ENCODE measurements at regions of chr9 and their contacts with region 1.

Region 1: DNA sequence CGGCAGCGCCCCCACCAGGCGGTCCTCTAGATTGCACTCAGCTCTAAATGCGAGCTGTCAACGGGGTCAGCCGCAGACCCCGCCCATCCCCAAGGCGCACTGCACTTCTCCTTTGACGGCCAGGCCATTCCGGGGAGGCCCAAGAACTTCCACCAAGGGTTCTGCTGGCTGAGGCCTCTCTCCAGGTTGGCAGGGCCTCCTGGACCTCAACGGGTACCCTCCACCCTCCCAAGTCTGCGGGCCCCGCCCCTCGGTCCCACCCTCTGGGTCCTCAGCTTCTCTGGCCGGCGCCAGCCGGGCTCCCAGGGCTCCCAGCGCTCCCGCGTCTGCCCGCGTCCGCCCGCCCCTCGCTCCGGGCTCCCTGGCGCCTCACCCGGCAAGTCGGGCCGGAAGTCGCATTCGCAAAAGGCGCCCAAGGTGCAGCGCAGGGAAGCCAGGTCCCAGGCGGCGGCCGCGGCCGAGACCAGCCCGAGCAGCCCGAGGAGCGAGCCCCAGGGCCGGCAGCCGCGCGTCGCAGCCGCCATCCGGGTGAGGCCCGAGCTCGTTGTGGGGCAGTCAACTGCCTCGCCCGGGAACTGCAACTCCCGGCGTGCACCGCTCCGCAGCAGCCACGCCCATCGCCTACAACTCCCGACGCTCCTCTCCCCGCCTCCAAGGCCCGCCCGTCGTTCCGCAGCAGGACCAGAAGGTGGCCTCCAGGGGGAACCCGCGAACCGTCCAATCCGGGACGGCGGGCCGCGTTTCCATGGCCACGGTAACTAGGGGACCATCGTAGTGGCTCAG is at the start of gene TOR2A:
- DNase-seq: peak; percentile 96
- H3K4me3 Mint-ChIP-seq: peak within 1 kb of the TSS; percentile 74
- H3K27ac Mint-ChIP-seq: peak within 1 kb of the TSS; percentile 22
- H3K4me1 Mint-ChIP-seq: no peaks in the 10 kb centered on the region
- H3K27me3 Mint-ChIP-seq: no peaks in the 10 kb centered on the region
- CTCF ChIP-seq: peak; percentile 96
- total RNA-seq, gene TOR2A: 8.4 and 11.3 TPM in 2 replicates

Region 2: DNA sequence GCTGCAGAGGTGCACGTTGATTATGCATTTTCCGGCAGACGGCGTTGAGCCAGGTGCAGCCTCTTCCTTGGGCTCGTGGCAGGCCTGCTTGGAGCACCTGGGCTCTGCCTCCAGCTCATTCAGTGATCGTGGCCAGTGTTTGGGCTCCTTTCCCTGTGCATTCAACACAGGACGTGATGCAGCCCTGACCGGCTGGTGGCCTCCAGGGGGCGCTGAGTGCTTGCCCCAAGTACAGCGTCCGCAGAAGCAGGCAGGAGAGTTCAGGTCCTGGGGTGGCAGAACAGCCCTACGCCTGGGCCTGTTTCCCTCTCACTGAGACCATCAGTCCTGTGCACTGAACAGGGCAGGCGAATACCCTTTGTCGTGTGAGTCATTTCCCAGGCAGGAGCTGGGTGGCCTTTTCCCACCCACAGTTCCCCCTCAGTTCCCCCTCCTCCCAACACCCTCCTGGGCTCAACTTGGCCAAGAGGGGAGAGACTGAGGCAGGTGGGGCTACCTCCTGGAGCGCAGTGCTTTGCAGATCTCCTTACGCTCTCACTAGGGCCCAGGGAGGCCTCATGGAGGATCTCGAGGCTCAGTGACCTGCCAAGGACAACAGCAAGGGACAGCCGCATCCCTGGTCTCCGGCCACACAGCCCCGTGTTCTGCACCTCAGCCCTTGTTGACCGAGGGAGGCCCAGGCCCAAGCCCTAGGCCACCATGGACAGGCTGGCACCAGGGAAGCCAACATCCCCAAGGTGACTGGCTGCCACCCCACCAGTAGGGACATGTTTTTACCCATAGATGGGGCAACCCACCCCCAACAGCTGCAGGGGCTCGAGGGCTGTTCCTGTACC is 230.8 kb before region 1 on chr9:
- CTCF ChIA-PET with region 1: no interaction called
- POLR2A ChIA-PET with region 1: interaction called, 3 read pairs
- intact Hi-C with region 1: loop called (anchors 5 kb)
- DNase-seq: peak; percentile 73
- H3K4me3 Mint-ChIP-seq: no peak overlapping the region
- H3K27ac Mint-ChIP-seq: peak overlapping the region; percentile 12
- H3K4me1 Mint-ChIP-seq: no peaks in the 10 kb centered on the region
- H3K27me3 Mint-ChIP-seq: no peaks in the 10 kb centered on the region
- CTCF ChIP-seq: peak; percentile 76

Region 3: DNA sequence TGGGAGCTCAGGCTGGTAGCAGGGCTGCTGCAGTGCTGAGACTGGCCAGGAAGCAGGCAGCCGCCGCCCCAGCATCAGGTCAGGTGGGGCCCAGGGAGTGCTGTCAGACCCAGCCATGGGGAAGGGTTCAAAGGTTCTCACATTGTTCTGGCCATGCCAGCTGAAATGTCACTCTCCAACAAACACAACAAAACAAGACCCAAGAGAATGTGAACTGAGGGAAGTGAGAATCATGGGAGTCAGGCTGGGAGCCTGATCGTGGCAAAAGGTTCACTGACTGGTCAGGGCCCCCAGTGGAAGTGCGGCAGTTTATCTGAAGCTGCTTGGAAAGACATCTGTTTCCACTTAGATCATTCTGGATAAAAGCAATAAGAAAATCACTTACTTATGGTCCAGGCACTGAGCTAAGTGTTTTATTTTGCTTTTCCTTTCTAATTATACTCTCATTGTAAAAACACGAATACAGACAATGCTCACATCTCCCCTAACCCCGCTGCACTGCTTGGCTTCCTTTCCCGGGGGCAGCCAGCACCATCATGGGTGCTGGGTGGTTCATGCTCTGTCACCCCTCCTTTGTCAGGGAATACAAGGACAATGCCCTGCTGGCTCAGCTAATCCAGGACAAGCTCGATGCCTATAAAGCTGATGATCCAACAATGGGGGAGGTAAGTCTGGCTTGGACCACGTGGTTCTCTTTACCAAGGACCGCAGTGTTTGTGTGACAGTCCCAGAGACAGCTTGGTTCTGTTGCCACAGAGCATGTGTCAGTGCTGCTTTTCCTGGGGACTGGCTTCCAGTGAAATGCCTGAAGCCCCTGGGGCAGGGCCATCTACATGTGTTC is 70.1 kb before region 1 on chr9:
- CTCF ChIA-PET with region 1: no interaction called
- POLR2A ChIA-PET with region 1: no interaction called
- intact Hi-C with region 1: no loop called
- DNase-seq: no peak
- H3K4me3 Mint-ChIP-seq: no peak overlapping the region
- H3K27ac Mint-ChIP-seq: no peak overlapping the region
- H3K4me1 Mint-ChIP-seq: no peaks in the 10 kb centered on the region
- H3K27me3 Mint-ChIP-seq: no peaks in the 10 kb centered on the region
- CTCF ChIP-seq: no peak

Region 4: GRCh38 chr9:127715394-127716337 is 19.3 kb before region 1 on chr9 and contains the starts of genes PTRH1 and TTC16:
- CTCF ChIA-PET with region 1: interaction called, 10 read pairs
- POLR2A ChIA-PET with region 1: interaction called, 10 read pairs
- intact Hi-C with region 1: no loop called
- DNase-seq: peak; percentile 95
- H3K4me3 Mint-ChIP-seq: peak within 1 kb of the TSS; percentile 79
- H3K27ac Mint-ChIP-seq: peak within 1 kb of the TSS; percentile 81
- H3K4me1 Mint-ChIP-seq: peaks cover 13% of the 10 kb centered on the region
- H3K27me3 Mint-ChIP-seq: no peaks in the 10 kb centered on the region
- CTCF ChIP-seq: no peak
- total RNA-seq, gene PTRH1: 35.2 and 37.8 TPM in 2 replicates
- total RNA-seq, gene TTC16: 0.19 and 0.32 TPM in 2 replicates

Region 5: GRCh38 chr9:127770905-127771569 is 36.1 kb after region 1 on chr9:
- CTCF ChIA-PET with region 1: interaction called, 10 read pairs
- POLR2A ChIA-PET with region 1: interaction called, 50 read pairs
- intact Hi-C with region 1: no loop called
- DNase-seq: peak; percentile 96
- H3K4me3 Mint-ChIP-seq: peak overlapping the region; percentile 83
- H3K27ac Mint-ChIP-seq: peak overlapping the region; percentile 43
- H3K4me1 Mint-ChIP-seq: no peaks in the 10 kb centered on the region
- H3K27me3 Mint-ChIP-seq: no peaks in the 10 kb centered on the region
- CTCF ChIP-seq: no peak

Region 6: DNA sequence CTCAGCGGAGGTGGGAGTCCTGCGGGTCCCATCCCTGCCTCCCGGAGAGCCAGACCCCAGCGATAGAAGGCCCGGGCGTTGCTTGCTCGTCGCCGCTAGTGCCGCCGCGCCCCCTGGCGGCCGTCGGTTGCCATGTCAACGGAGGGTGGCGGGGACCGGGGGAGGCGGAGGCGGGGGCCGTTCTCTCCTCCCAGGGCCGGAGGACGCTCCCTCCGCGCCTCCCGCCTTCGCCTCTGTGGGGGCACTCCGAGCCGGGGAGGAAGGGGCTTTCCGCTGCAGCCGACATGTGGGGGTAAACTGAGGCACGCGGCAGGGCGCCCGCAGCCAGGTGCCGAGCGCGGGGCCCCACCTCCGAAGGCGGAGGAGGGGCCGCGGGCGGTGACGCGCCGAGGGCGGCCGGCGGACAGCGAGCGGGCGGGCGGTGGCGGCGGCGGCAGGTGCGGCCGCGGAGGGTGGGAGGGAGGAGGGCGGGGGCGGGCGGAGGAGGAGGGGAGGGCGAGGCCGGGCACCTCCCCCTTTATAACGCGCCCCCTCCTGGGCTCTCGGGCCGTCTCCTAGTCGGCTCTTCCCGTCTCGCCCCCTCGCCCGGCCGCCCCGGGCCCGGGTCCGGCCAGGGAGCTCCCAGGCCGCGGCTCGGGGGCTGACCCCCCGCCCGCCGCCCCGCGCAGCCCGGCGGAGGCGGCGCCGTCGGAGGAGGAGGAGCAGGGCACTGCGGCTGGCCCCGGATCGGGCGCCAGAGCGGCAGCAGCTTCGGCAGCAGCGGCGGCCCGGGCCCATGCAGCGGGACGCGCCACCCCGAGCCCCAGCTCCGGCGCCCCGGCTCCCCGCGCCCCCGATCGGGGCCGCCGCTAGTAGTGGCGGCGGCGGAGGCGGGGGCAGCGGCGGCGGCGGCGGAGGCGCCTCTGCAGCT is 50.3 kb after region 1 on chr9:
- CTCF ChIA-PET with region 1: interaction called, 27 read pairs
- POLR2A ChIA-PET with region 1: interaction called, 37 read pairs
- intact Hi-C with region 1: loop called (anchors 1 kb)
- DNase-seq: peak; percentile 76
- H3K4me3 Mint-ChIP-seq: peak overlapping the region; percentile 90
- H3K27ac Mint-ChIP-seq: peak overlapping the region; percentile 63
- H3K4me1 Mint-ChIP-seq: peaks cover 9% of the 10 kb centered on the region
- H3K27me3 Mint-ChIP-seq: no peaks in the 10 kb centered on the region
- CTCF ChIP-seq: peak; percentile 92

Region 7: GRCh38 chr9:127916665-127917613 is 182.0 kb after region 1 on chr9 and contains the start of gene ST6GALNAC4:
- CTCF ChIA-PET with region 1: interaction called, 25 read pairs
- POLR2A ChIA-PET with region 1: interaction called, 23 read pairs
- intact Hi-C with region 1: loop called (anchors 1 kb)
- DNase-seq: peak; percentile 79
- H3K4me3 Mint-ChIP-seq: peak within 1 kb of the TSS; percentile 74
- H3K27ac Mint-ChIP-seq: peak within 1 kb of the TSS; percentile 93
- H3K4me1 Mint-ChIP-seq: peaks cover 27% of the 10 kb centered on the region
- H3K27me3 Mint-ChIP-seq: no peaks in the 10 kb centered on the region
- CTCF ChIP-seq: no peak
- total RNA-seq, gene ST6GALNAC4: 36.3 and 39.5 TPM in 2 replicates

Measured in MCF 10A (cell line).